ENCODE measurements at regions of chr3 and their contacts with region 1.

Region 1: GRCh38 chr3:119676771-119677640 is at the start of gene COX17:
- DNase-seq: peak; percentile 98
- H3K4me3 ChIP-seq: peak within 1 kb of the TSS; percentile 87
- H3K27ac ChIP-seq: peak within 1 kb of the TSS; percentile 77
- H3K4me1 ChIP-seq: peaks cover 27% of the 10 kb centered on the region
- CTCF ChIP-seq: no peak
- total RNA-seq, gene COX17: 77.3 and 109 TPM in 2 replicates

Region 2: GRCh38 chr3:119145500-119146191 is 531.4 kb before region 1 on chr3 and contains the start of gene TEX55:
- CTCF ChIA-PET with region 1: no interaction called
- POLR2A ChIA-PET with region 1: no interaction called
- intact Hi-C with region 1: loop called (anchors 5 kb)
- DNase-seq: peak; percentile 31
- H3K4me3 ChIP-seq: no peak within 1 kb of the TSS
- H3K27ac ChIP-seq: no peak within 1 kb of the TSS
- H3K4me1 ChIP-seq: no peaks in the 10 kb centered on the region
- CTCF ChIP-seq: peak; percentile 79
- total RNA-seq, gene TEX55: not detected in 2 replicates

Region 3: GRCh38 chr3:119279101-119279554 is 397.9 kb before region 1 on chr3:
- CTCF ChIA-PET with region 1: no interaction called
- POLR2A ChIA-PET with region 1: no interaction called
- intact Hi-C with region 1: loop called (anchors 2 kb)
- DNase-seq: no peak
- H3K4me3 ChIP-seq: no peak overlapping the region
- H3K27ac ChIP-seq: no peak overlapping the region
- H3K4me1 ChIP-seq: no peaks in the 10 kb centered on the region
- CTCF ChIP-seq: no peak

Region 4: DNA sequence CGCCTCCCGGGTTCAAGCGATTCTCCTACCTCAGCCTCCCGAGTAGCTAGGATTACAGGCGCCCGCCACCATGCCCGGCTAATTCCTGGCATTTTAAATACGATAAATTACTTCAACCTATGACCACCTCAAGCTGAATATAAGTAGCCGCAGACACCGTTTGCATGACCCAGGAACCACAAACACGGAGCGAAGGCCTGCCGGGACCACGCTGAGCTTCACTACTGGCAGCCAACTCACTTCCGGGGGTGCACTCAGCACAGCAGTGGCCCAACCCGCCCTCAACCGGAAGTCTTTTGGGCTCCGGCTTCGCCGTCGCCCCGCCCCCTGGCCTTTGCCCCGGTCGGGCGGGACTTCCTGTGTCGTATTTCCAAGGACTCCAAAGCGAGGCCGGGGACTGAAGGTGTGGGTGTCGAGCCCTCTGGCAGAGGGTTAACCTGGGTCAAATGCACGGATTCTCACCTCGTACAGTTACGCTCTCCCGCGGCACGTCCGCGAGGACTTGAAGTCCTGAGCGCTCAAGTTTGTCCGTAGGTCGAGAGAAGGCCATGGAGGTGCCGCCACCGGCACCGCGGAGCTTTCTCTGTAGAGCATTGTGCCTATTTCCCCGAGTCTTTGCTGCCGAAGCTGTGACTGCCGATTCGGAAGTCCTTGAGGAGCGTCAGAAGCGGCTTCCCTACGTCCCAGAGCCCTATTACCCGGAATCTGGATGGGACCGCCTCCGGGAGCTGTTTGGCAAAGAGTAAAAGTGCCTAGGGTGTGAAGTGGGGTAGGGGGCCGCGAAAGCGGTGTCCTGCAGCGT is 178.6 kb before region 1 on chr3 and contains the start of gene TIMMDC1:
- CTCF ChIA-PET with region 1: no interaction called
- POLR2A ChIA-PET with region 1: interaction called, 7 read pairs
- intact Hi-C with region 1: loop called (anchors 1 kb)
- DNase-seq: peak; percentile 98
- H3K4me3 ChIP-seq: peak within 1 kb of the TSS; percentile 75
- H3K27ac ChIP-seq: peak within 1 kb of the TSS; percentile 66
- H3K4me1 ChIP-seq: peaks cover 29% of the 10 kb centered on the region
- CTCF ChIP-seq: no peak
- total RNA-seq, gene TIMMDC1: 54.6 and 61.0 TPM in 2 replicates

Region 5: GRCh38 chr3:119716998-119717397 is 40.0 kb after region 1 on chr3:
- CTCF ChIA-PET with region 1: no interaction called
- POLR2A ChIA-PET with region 1: no interaction called
- intact Hi-C with region 1: no loop called
- DNase-seq: no peak
- H3K4me3 ChIP-seq: no peak overlapping the region
- H3K27ac ChIP-seq: no peak overlapping the region
- H3K4me1 ChIP-seq: no peaks in the 10 kb centered on the region
- CTCF ChIP-seq: no peak

Region 6: GRCh38 chr3:120348981-120349818 is 672.2 kb after region 1 on chr3 and contains the start of gene LRRC58:
- CTCF ChIA-PET with region 1: no interaction called
- POLR2A ChIA-PET with region 1: no interaction called
- intact Hi-C with region 1: loop called (anchors 5 kb)
- DNase-seq: peak; percentile 94
- H3K4me3 ChIP-seq: peak within 1 kb of the TSS; percentile 88
- H3K27ac ChIP-seq: peak within 1 kb of the TSS; percentile 69
- H3K4me1 ChIP-seq: peaks cover 26% of the 10 kb centered on the region
- CTCF ChIP-seq: peak; percentile 64
- total RNA-seq, gene LRRC58: 21.5 and 24.1 TPM in 2 replicates